IMR-90 (cell line): ENCODE measurements at regions of chr7 and their contacts with region 1.

Region 1: DNA sequence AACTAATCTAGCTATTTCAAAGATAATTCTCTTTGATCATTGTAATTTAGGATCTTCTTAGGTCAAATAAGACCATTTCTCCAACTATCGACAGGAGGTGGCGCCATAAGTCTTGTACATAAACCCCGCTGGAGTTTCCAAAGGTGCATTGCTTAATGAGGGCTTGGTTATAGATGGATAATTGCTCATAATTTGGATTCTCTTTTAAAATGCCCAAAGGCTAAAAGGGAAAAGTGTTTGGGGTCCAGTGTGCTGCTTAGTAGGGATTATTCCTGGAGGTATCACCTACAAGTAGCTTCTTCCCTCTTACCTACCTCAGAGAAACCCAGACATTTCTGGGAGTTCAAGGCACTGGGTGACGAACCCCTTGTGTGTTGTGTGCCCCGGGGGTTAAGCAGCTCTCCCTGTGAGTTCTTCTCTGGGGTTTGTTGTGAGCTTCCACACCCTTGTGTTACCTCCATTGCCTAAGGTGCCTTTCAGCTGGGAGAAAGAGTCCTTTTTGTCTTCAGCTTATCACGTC is 75.2 kb downstream of the PAXIP1 start:
- DNase-seq: peak; percentile 87
- ATAC-seq: peak; percentile 48
- H3K4me3 ChIP-seq: peak overlapping the region; percentile 42
- H3K27ac ChIP-seq: peak overlapping the region; percentile 51; the same call in 1 of the 2 replicates
- H3K4me1 ChIP-seq: 0 out of 2 replicates have a peak, but pooled peaks cover 2% of the 10 kb centered on the region
- H3K27me3 ChIP-seq: no peaks in the 10 kb centered on the region
- CTCF ChIP-seq: peak; percentile 72
- POLR2A ChIP-seq: no peak
- RAD21 ChIP-seq: peak; percentile 78

Region 2: GRCh38 chr7:154789404-154789803 is 138.3 kb before region 1 on chr7:
- CTCF ChIA-PET with region 1: no interaction called
- POLR2A ChIA-PET with region 1: no interaction called
- dilution Hi-C with region 1: no loop called
- in situ Hi-C with region 1: no loop called
- intact Hi-C with region 1: no loop called
- DNase-seq: no peak
- ATAC-seq: no peak
- H3K4me3 ChIP-seq: no peak overlapping the region
- H3K27ac ChIP-seq: no peak overlapping the region
- H3K4me1 ChIP-seq: no peaks in the 10 kb centered on the region
- H3K27me3 ChIP-seq: no peaks in the 10 kb centered on the region
- CTCF ChIP-seq: no peak
- POLR2A ChIP-seq: no peak
- RAD21 ChIP-seq: no peak

Region 3: GRCh38 chr7:154913638-154914312 is 13.9 kb before region 1 on chr7:
- CTCF ChIA-PET with region 1: interaction called, 11 read pairs
- POLR2A ChIA-PET with region 1: no interaction called
- dilution Hi-C with region 1: no loop called
- in situ Hi-C with region 1: no loop called
- intact Hi-C with region 1: no loop called
- DNase-seq: peak; percentile 51
- ATAC-seq: peak; percentile 98
- H3K4me3 ChIP-seq: no peak overlapping the region
- H3K27ac ChIP-seq: no peak overlapping the region
- H3K4me1 ChIP-seq: no peaks in the 10 kb centered on the region
- H3K27me3 ChIP-seq: peaks cover 12% of the 10 kb centered on the region; the same call in 1 of the 2 replicates
- CTCF ChIP-seq: peak; percentile 78
- POLR2A ChIP-seq: no peak
- RAD21 ChIP-seq: peak; percentile 80

Region 4: DNA sequence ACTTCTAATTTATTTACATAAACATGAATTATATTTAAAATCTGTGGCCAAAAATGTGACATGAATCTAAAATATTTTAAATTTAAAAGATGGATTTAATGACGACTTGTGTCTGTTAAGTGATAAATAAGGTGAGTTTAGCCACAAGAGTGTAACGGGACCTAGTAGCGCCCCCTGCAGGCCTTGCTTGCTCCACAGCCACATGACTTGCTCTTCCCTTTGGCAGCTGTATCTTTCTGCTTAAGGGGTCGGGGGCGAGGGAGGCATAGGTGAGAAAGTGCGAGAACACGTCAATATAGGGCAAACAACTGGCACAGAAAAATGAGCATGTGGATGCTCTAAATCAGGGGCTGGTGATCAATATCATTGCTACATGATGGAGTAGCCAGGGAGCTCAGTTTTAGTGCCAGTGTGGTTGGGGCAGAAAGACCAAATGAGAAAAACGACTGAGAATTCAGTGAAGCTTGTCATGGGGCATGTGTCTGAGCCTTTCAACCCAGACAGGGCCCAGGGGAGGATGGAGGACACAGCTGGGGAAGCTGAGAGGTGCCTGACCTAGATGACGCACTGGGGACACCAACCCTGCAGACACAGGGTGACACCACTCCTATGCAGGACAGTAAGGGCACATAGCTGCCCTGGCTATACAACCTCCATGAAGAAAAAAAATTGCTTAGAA is 25.5 kb after region 1 on chr7:
- CTCF ChIA-PET with region 1: interaction called, 13 read pairs
- POLR2A ChIA-PET with region 1: no interaction called
- dilution Hi-C with region 1: no loop called
- in situ Hi-C with region 1: no loop called
- intact Hi-C with region 1: loop called (anchors 1 kb)
- DNase-seq: peak; percentile 29
- ATAC-seq: peak; percentile 53; the same call in 1 of the 2 replicates
- H3K4me3 ChIP-seq: no peak overlapping the region
- H3K27ac ChIP-seq: no peak overlapping the region
- H3K4me1 ChIP-seq: no peaks in the 10 kb centered on the region
- H3K27me3 ChIP-seq: no peaks in the 10 kb centered on the region
- CTCF ChIP-seq: peak; percentile 51
- POLR2A ChIP-seq: no peak
- RAD21 ChIP-seq: peak; percentile 22; the same call in 1 of the 2 replicates

Region 5: GRCh38 chr7:155069992-155070751 is 142.5 kb after region 1 on chr7 and contains the start of gene HTR5A:
- CTCF ChIA-PET with region 1: no interaction called
- POLR2A ChIA-PET with region 1: no interaction called
- dilution Hi-C with region 1: no loop called
- in situ Hi-C with region 1: no loop called
- intact Hi-C with region 1: loop called (anchors 5 kb)
- DNase-seq: peak; percentile 80
- ATAC-seq: peak; percentile 100
- H3K4me3 ChIP-seq: no peak within 1 kb of the TSS
- H3K27ac ChIP-seq: no peak within 1 kb of the TSS
- H3K4me1 ChIP-seq: no peaks in the 10 kb centered on the region
- H3K27me3 ChIP-seq: no peaks in the 10 kb centered on the region
- CTCF ChIP-seq: no peak
- POLR2A ChIP-seq: no peak
- RAD21 ChIP-seq: peak; percentile 33
- total RNA-seq, gene HTR5A: not detected in 2 replicates

Region 6: GRCh38 chr7:155190688-155191087 is 263.0 kb after region 1 on chr7:
- CTCF ChIA-PET with region 1: no interaction called
- POLR2A ChIA-PET with region 1: no interaction called
- dilution Hi-C with region 1: no loop called
- in situ Hi-C with region 1: no loop called
- intact Hi-C with region 1: loop called (anchors 5 kb)
- DNase-seq: no peak
- ATAC-seq: peak; percentile 97
- H3K4me3 ChIP-seq: no peak overlapping the region
- H3K27ac ChIP-seq: no peak overlapping the region
- H3K4me1 ChIP-seq: no peaks in the 10 kb centered on the region
- H3K27me3 ChIP-seq: peaks cover 2% of the 10 kb centered on the region
- CTCF ChIP-seq: peak; percentile 83
- POLR2A ChIP-seq: no peak
- RAD21 ChIP-seq: peak; percentile 94

Region 7: GRCh38 chr7:155344600-155345433 is 417.1 kb after region 1 on chr7:
- CTCF ChIA-PET with region 1: interaction called, 9 read pairs
- POLR2A ChIA-PET with region 1: no interaction called
- dilution Hi-C with region 1: no loop called
- in situ Hi-C with region 1: loop called (anchors 10 kb)
- intact Hi-C with region 1: loop called (anchors 1 kb)
- DNase-seq: peak; percentile 64
- ATAC-seq: peak; percentile 99
- H3K4me3 ChIP-seq: peak overlapping the region; percentile 36
- H3K27ac ChIP-seq: no peak overlapping the region
- H3K4me1 ChIP-seq: no peaks in the 10 kb centered on the region
- H3K27me3 ChIP-seq: peaks cover 4% of the 10 kb centered on the region
- CTCF ChIP-seq: peak; percentile 94
- POLR2A ChIP-seq: no peak
- RAD21 ChIP-seq: peak; percentile 82

Region 8: DNA sequence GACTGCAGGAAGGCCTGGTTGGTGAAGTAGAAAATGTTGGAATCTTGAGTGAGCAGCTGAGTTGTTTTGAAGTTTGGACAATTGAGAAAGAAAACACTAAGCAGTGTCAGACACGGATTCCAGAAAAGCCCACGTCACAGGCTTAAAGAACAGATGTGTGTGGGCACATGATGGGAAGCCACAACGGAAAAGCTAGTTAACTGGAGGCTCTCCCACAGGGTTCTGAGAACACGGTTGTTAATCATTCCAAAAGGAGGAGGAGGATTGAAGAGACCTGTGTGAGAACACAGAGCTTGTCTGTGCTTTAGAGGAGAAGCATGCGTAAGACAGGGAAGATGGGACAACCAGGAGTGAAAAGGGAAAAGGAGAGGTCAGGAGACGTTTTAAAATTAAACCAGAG is 842.0 kb after region 1 on chr7:
- CTCF ChIA-PET with region 1: interaction called, 4 read pairs
- POLR2A ChIA-PET with region 1: no interaction called
- dilution Hi-C with region 1: no loop called
- in situ Hi-C with region 1: no loop called
- intact Hi-C with region 1: loop called (anchors 5 kb)
- DNase-seq: no peak
- ATAC-seq: no peak
- H3K4me3 ChIP-seq: no peak overlapping the region
- H3K27ac ChIP-seq: no peak overlapping the region
- H3K4me1 ChIP-seq: no peaks in the 10 kb centered on the region
- H3K27me3 ChIP-seq: no peaks in the 10 kb centered on the region
- CTCF ChIP-seq: no peak
- POLR2A ChIP-seq: no peak
- RAD21 ChIP-seq: no peak